ENCODE measurements at regions of chr12 and their contacts with region 1.

Region 1: GRCh38 chr12:113221181-113221997 is at the start of gene TPCN1:
- DNase-seq: peak; percentile 99 to 100
- H3K4me3 ChIP-seq: peak within 1 kb of the TSS; percentile 86 to 98 (median 95)
- H3K27ac ChIP-seq: peak within 1 kb of the TSS; percentile 96
- H3K4me1 ChIP-seq: peaks cover 0 to 15% of the 10 kb centered on the region in 2 donors
- H3K27me3 ChIP-seq: no peaks in the 10 kb centered on the region
- CTCF ChIP-seq: peak; percentile 12 to 30 (median 13)
- POLR2A ChIP-seq: peak; percentile 84
- total RNA-seq, gene TPCN1: 46.9 to 71.7 (median 59.5) TPM

Region 2: DNA sequence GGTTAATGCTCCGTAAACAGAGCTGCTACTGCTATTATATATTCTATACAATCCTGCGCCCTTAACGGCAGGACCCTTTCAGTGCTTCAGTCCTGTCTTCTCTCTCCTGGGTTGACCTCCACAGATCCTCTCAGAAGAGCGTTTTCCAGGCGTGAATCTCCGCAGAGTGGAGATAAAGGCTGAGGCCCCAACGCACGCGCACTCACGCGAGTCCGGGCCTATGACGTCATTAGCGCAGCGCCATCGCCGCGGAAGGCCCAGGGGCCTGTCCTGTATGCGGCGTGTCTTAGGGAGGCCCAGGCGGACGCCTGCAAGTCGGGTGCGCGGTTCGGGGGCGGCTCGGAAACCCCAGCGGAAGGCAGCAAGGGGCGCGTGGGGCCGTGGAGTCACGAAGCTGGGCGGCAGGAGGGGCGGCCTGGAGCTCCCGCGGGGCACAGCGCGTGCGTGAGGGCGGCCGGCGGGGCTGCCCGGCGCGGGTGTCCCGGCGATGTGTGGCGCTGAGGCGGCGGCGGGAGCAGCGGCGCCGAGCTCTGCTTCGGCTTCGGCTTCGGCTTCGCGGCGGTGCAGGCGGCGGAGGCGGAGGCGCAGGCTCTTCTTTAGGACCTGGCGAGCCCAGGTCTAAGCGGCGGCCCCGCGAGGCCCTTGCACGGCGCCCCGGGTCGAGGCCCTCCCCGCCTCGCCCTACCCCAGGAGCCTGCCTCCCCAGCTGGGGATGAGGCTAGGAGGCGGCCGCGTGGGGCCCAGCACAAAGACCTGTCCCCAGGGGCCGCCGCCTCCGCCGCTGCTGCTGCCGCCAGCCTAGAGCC is 1379.4 kb before region 1 on chr12 and contains the start of gene MAPKAPK5:
- intact Hi-C with region 1: loop called (anchors 10 kb)
- DNase-seq: peak; percentile 90 to 92
- H3K4me3 ChIP-seq: peak within 1 kb of the TSS; percentile 90 to 100 (median 96)
- H3K27ac ChIP-seq: peak within 1 kb of the TSS; percentile 97
- H3K4me1 ChIP-seq: peaks cover 11 to 12% of the 10 kb centered on the region in 2 donors
- H3K27me3 ChIP-seq: no peaks in the 10 kb centered on the region
- CTCF ChIP-seq: no peak
- POLR2A ChIP-seq: peak; percentile 22
- total RNA-seq, gene MAPKAPK5: 38.2 to 59.7 (median 40.0) TPM

Region 3: DNA sequence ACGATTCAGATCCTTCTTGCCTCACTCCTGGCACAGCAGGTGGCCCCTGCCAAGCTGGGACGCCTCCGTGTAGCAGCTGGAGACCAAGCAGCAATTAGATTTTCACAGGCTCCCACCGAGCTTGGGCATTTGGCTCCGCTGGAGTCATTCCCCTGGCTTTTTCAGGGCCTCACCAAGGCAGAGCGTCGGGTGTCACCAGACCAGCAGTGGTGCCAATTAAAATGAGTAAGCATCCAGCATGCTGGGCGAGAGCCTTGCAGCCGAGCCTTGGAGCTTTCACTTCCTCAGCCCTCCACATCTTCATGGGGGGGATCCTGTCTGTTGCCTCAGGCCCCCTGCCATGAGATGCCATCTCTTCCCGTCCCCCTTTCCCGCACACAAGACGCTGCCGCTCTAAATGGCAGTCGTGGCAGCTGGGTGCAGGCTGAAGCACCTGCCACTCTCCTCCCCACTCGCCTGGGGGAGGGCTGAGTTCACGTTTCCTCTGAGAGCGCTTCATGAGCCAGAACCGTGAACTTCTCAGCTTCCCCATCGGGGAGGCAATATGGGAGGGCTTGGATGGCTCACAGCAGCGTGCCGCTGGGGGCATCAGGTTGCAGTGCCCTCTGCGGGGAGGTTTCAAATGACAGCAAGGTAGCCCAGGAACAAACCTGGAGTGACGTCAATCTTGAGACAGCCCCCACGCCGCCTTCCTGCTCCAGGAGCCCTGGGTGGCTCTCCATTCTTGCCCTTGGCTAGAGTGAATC is 11.6 kb after region 1 on chr12:
- intact Hi-C with region 1: no loop called
- DNase-seq: no peak
- H3K4me3 ChIP-seq: no peak overlapping the region
- H3K27ac ChIP-seq: peak overlapping the region; percentile 26 to 27
- H3K4me1 ChIP-seq: no peaks in the 10 kb centered on the region
- H3K27me3 ChIP-seq: no peaks in the 10 kb centered on the region
- CTCF ChIP-seq: no peak
- POLR2A ChIP-seq: no peak

Region 4: DNA sequence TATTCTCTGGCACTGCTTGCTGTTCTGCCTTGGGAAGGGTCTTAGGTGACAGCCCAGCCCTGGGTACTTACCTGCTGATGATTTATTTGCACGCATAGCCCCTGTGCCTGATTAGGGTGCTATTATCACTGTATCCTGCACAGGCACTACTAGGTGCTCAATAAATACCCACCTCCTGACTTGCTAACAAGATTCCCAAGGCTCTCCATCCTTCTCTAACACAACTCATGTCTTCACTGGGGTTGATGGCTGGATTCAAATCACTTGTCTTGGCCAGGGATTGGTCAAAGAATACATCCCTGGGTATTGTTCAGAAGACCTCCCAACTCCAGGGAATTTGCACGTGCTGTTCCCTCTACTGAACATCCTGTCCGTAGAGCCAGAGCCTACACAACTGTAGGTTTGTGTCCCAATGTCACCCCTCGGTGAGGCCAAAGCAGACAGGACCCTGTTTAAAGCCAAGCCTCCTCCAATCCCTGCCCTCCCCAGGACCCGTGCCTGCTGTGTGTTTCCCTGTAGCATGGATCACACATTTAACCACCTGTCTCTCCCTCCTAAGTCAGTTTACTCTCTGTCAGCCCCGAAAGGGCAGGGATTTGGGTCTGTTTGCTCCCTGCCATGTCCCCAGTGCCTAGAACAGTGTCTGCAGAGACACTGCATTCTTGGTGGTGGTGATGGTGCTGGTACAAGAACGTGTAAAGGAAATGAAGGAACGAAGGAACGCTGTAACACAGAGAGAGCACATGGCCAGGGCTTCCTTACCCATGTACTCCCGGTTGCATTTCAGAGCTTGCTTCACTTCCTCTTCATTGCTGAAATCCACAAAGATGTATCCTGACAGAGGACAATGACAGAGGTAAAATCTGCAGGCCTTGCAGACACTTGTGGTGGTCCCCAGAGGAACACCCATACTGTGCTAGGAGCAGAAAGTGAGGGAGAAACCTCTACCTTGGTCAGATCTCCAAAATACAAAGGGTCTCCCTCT is 728.2 kb after region 1 on chr12:
- intact Hi-C with region 1: loop called (anchors 5 kb)
- DNase-seq: no peak
- H3K4me3 ChIP-seq: no peak overlapping the region
- H3K27ac ChIP-seq: no peak overlapping the region
- H3K4me1 ChIP-seq: no peaks in the 10 kb centered on the region
- H3K27me3 ChIP-seq: no peaks in the 10 kb centered on the region
- CTCF ChIP-seq: no peak
- POLR2A ChIP-seq: no peak

Measured in breast epithelium (tissue), 4 donors.